Posterior cingulate gyrus (tissue), 11 donors: ENCODE measurements at regions of chr3 and their contacts with region 1.

Region 1: DNA sequence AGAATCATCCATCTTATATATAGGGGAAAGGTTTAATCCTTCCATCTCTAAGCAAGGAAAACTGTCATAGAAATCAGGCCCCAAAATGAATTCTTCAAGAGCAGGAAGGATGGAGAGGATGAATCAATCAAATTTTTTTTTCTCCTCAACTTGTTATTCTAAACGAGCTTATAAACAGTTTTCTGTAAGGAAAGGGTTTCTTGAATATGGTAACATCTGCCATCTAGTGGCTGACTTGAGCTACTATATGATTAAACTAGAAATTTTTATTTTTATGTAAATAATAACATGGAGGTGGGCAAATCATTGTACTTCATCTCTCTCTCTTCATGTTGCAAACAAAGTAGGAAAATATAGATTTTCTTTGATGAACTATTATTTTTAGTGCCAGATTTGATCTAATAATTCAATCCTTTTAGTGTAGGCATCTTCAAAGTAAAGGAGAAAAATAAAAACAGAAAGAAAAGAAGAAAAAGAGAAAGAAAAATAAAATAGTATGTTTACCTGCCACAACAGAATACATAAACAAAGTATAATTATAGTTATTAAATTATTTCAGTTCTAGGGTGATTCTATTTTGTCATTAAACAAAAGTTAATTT is 146.6 kb downstream of the SERPINI1 start:
- DNase-seq: no peak

Region 2: GRCh38 chr3:167380004-167380689 is 502.0 kb before region 1 on chr3 and contains the start of gene ZBBX:
- intact Hi-C with region 1: loop called (anchors 1 kb)
- DNase-seq: peak; percentile 84 to 98 (median 92)

Region 3: GRCh38 chr3:167406875-167407492 is 475.2 kb before region 1 on chr3:
- intact Hi-C with region 1: loop called (anchors 2 kb)
- DNase-seq: peak; percentile 32 to 94 (median 62)

Region 4: GRCh38 chr3:167684388-167684993 is 197.7 kb before region 1 on chr3:
- intact Hi-C with region 1: loop called (anchors 10 kb)
- DNase-seq: peak in 1 of 10 donors; percentile 41

Region 5: DNA sequence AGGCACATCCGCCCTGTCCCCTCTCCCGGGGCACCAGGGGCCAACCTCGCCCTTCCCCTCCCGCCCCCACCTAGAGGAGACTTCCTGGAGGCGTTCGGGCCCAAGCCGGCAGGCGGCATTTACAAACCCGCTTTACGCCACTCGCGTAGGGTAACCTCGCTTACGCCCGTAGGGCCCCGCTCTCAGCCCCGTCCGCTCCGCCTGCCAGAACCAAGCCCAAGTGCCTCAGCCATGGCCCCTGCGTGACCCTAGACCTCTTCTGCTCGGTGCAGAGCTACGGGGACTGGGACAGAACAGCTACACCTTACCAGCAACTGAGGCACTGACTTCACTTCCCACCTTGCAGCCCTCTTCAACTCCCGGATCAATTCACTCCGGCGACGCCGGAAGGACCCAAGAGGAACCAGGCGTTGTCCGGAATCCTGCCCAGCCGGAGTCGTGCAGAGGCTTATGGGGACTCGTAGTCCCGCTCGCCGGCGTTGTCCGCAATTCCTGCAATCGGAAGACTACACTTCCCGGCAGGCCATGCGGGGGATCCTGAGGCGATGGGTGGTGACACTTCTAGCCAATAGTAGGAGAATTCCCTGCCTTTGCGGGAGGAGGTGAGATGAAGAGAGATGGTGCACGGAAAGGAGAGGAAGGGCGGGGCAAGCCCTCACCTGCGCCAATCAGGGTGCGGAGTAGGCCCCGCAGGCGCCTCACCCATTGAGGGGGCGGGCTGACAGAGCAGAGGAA is 147.5 kb before region 1 on chr3 and contains the start of gene PDCD10:
- intact Hi-C with region 1: loop called (anchors 5 kb)
- DNase-seq: peak; percentile 96 to 100 (median 99)

Region 6: DNA sequence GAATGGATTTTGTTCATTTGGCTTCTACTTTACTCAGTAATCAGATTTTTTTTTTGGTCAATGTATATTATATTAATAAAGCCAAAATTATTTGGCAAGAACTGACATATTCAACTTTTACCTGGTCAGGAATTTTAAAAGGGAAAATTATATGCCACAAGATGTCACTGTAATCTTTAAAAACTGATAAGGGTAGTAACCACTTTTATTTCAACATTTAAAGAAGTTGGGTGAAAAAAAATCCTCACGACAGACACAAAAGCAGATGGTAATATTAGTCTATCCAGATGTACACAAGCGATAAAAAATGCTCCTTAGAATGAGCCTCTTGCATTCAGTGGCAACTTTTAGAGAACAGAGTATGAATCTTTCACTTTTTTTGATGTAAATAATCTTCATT is 44.7 kb before region 1 on chr3:
- intact Hi-C with region 1: loop called (anchors 5 kb)
- DNase-seq: no peak